ENCODE measurements at regions of chr20 and their contacts with region 1.

Region 1: DNA sequence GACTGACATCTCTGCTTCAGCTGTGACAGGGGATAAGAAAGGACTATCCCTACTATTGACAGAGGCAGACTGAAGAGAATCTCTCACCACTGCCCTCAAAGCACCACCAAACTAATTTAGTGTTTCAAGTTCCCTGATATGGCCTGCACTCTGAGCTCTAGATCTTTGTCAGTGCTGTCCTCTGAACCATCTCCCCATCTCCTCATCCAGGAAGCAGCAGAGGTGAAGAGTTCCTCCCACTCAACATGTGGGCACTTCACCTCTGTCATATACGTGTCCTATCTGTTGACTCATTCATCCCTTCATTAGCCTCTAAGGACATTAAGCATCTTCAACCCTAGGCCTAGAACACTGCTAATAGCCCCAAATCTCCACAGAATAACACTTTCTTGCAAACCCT is 14.1 kb downstream of the FAM210B start:
- DNase-seq: no peak
- H3K4me3 Mint-ChIP-seq: no peak overlapping the region
- H3K27ac Mint-ChIP-seq: peak overlapping the region; percentile 69
- H3K4me1 Mint-ChIP-seq: peaks cover 25% of the 10 kb centered on the region
- H3K27me3 Mint-ChIP-seq: no peaks in the 10 kb centered on the region

Region 2: GRCh38 chr20:56348308-56348700 is 24.5 kb before region 1 on chr20:
- CTCF ChIA-PET with region 1: interaction called, 3 read pairs
- POLR2A ChIA-PET with region 1: interaction called, 10 read pairs
- DNase-seq: no peak
- H3K4me3 Mint-ChIP-seq: no peak overlapping the region
- H3K27ac Mint-ChIP-seq: no peak overlapping the region
- H3K4me1 Mint-ChIP-seq: peaks cover 5% of the 10 kb centered on the region
- H3K27me3 Mint-ChIP-seq: peaks cover 38% of the 10 kb centered on the region